Lower lobe of right lung (tissue), 2 donors: ENCODE measurements at regions of chr3 and their contacts with region 1.

Region 1: GRCh38 chr3:179015551-179016020 is 56.0 kb downstream of the ZMAT3 start:
- DNase-seq: no peak
- ATAC-seq: peak; percentile 79 to 88
- H3K4me3 ChIP-seq: no peak overlapping the region
- H3K27ac ChIP-seq: no peak overlapping the region
- H3K4me1 ChIP-seq: peaks cover 9% of the 10 kb centered on the region
- H3K27me3 ChIP-seq: no peaks in the 10 kb centered on the region
- CTCF ChIP-seq: peak; percentile 88

Region 2: GRCh38 chr3:178536211-178537079 is 479.1 kb before region 1 on chr3 and contains the start of gene KCNMB2:
- intact Hi-C with region 1: no loop called
- DNase-seq: no peak
- ATAC-seq: no peak
- H3K4me3 ChIP-seq: peak within 1 kb of the TSS; percentile 44
- H3K27ac ChIP-seq: no peak within 1 kb of the TSS
- H3K4me1 ChIP-seq: no peaks in the 10 kb centered on the region
- H3K27me3 ChIP-seq: no peaks in the 10 kb centered on the region
- CTCF ChIP-seq: no peak
- total RNA-seq, gene KCNMB2: 0.56 TPM

Region 3: GRCh38 chr3:179318876-179319275 is 303.3 kb after region 1 on chr3:
- intact Hi-C with region 1: loop called (anchors 5 kb)
- DNase-seq: no peak
- ATAC-seq: no peak
- H3K4me3 ChIP-seq: no peak overlapping the region
- H3K27ac ChIP-seq: no peak overlapping the region
- H3K4me1 ChIP-seq: peaks cover 6% of the 10 kb centered on the region
- H3K27me3 ChIP-seq: no peaks in the 10 kb centered on the region
- CTCF ChIP-seq: no peak

Region 4: DNA sequence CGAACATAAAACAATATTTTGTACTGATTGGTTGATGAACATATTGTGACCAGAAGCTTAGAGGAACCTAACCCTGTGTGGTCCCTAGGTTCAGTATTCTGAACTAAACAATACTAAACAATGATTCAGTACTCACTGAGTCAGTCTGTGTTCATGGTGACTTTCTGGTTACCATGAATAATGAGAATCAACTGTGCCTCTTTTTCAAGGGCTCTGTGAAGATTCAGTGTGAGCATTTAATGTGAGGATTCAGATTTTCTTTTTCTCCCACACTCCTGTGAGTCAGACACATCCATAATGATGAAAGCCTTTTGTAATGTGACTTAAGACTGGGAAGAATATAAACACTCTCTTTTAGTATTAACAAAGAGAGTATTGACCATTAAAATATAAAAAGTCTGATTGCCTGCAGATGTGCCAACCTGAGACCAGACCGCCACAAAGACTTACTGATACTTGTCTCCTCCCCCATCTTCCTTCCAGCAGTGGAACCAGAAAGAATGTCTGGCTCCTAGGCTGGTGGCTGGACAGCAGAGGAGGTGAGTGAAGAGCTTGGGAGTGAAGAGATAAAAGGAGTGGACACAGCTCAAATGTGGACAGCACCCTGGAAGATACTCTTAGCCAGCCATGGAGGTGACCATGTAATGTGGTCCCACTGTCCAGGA is 529.5 kb after region 1 on chr3:
- intact Hi-C with region 1: no loop called
- DNase-seq: no peak
- ATAC-seq: no peak
- H3K4me3 ChIP-seq: no peak overlapping the region
- H3K27ac ChIP-seq: no peak overlapping the region
- H3K4me1 ChIP-seq: no peaks in the 10 kb centered on the region
- H3K27me3 ChIP-seq: no peaks in the 10 kb centered on the region
- CTCF ChIP-seq: no peak